Left cardiac atrium (tissue), 4 donors: ENCODE measurements at regions of chr13 and their contacts with region 1.

Region 1: GRCh38 chr13:40190641-40191100 is 475.8 kb downstream of the FOXO1 start:
- DNase-seq: peak; percentile 53
- ATAC-seq: peak in 1 of 2 donors; percentile 80

Region 2: DNA sequence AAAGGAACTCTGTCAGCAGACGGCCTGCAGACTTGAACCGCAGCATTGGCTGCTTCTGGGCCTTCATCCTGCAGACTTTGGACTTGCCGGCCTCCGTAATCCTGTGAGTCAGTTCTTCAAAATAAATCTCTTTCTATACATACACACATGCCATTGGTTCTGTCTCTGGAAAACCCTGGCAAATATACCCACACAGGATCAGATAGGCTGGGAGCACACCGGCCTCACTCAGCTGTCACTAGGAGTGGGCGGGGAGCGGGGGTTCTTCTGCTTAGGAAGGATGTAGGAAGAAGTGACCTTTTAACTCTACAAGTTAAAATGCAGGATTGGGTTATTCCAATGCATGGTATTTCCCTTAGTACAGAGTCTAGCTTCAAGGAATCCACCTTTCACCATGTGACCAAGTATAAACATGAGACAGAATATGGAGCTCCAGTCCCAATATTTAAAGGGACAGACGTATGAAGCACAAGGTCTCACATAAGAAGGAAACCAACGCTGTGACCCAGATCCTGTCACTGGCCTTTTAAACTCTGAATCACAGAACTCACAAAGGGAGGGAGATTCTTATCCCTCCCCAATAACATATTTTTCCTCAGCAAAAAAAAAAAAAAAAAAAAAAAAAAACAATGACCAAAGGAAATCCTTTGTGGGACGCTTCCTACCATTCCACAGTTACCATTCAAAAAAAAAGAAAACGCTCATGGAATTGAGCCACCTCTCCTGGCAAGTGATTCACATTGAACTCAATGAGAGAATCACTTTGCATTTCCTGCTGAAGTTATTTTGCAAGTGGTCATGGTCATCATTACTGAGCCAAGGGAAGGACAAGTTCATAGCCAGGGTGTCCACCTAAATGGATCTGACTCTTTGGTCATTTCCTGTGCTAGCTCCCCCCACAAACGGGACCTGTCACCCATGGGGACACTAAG is 122.9 kb after region 1 on chr13:
- intact Hi-C with region 1: loop called in 1 of 2 experiments (anchors 5 kb)
- DNase-seq: no peak
- ATAC-seq: peak; percentile 56 to 64

Region 3: DNA sequence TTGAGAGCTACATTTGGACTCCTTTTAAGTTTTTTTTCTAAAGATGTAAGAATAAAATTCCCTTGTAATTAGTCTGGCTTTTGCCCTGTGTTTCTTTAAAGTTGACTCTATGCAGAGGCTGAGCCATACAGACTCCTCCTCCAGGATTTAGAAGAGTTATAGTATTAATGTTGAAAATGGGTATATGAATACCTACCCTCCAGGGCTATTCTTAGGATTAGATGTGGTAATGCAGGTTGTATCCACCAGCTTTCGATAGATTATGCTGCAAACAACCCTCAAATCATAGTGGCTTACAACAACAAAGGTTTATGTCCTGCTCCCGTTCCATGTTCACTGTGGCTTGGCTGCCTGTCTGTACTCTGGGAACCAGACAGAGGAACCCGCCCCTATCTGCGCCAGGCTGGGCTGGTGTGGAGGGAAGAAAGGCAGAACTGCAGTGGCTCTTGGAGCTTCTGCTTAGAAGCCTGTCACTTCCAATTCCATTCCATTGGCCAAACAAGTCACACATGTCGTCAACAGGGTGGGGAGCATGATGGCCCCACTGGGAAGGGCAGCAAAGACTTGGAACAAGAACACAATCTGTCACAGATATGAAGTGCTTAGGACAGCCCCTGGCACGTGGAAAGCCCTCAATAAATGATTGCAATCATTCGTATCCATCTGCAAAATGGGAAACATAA is 185.0 kb after region 1 on chr13:
- intact Hi-C with region 1: no loop called
- DNase-seq: peak; percentile 54
- ATAC-seq: peak; percentile 79 to 86